Gastrocnemius medialis (tissue), 4 donors: ENCODE measurements at regions of chr13 and their contacts with region 1.

Region 1: GRCh38 chr13:41061075-41061913 is at the start of gene WBP4:
- DNase-seq: peak; percentile 91 to 93
- ATAC-seq: peak; percentile 74 to 76
- H3K4me3 ChIP-seq: peak within 1 kb of the TSS; percentile 71 to 90 (median 86)
- H3K27ac ChIP-seq: peak within 1 kb of the TSS; percentile 90 to 100 (median 98)
- H3K4me1 ChIP-seq: peaks cover 64 to 67% of the 10 kb centered on the region in 2 donors
- H3K27me3 ChIP-seq: no peaks in the 10 kb centered on the region
- CTCF ChIP-seq: peak in 2 of 5 experiments; percentile 3 to 24
- POLR2A ChIP-seq: peak; percentile 74 to 80
- total RNA-seq, gene WBP4: 20.2 to 31.3 (median 25.5) TPM

Region 2: DNA sequence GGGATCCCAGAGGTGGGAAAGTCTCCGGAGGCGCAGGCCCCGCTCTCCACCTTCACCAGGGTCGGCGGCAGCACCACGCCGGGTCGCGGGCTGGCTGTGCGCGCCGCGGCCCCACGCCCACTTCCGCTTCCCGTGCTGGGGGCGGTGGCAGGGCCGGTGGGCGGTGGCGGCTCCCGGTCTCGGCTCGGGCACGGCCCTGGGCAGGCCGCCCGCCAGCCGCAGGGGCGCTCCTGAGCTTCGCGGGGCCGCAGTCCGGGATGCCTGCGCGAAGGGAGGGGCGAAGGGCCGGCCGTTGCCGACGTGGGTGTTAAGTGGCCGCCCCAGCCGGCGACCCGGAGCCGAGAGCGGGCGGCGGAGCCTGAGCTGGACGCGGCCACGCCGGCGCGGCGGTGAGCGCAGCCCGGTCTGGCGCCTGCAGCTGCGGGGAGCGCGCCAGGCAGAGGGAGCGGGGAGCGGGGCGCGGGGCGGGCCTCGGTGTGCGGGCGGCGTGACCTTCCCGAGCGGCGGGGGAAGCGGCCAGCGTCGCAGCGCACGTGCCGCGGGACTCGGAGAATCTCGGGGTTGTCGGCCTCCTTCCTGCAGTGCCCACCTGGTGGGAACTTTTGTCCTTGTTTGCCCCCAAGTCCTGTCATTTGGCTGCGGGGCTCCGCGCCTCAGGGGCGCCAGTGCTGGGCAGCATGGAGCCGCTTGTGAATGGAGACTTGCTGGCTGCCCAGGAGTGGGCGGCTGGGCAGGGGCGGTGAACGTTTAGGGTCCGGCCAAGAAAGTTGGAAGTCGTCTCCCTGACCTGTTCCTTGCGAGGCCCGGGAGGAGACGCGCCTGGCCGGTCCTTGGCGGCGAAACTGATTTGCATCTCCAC is 271.8 kb before region 1 on chr13 and contains the start of gene SLC25A15:
- in situ Hi-C with region 1: loop called in 1 of 4 experiments (anchors 25 kb)
- intact Hi-C with region 1: no loop called
- DNase-seq: peak; percentile 25 to 67
- ATAC-seq: peak; percentile 84 to 85
- H3K4me3 ChIP-seq: peak within 1 kb of the TSS; percentile 55 to 99 (median 70)
- H3K27ac ChIP-seq: peak within 1 kb of the TSS; percentile 69 to 84 (median 78)
- H3K4me1 ChIP-seq: peaks cover 4 to 5% of the 10 kb centered on the region in 2 donors
- H3K27me3 ChIP-seq: no peaks in the 10 kb centered on the region
- CTCF ChIP-seq: peak in 3 of 5 experiments; percentile 23 to 38 (median 28)
- POLR2A ChIP-seq: peak in 1 of 2 donors; percentile 37
- total RNA-seq, gene SLC25A15: 4.3 to 19.3 (median 11.0) TPM

Region 3: DNA sequence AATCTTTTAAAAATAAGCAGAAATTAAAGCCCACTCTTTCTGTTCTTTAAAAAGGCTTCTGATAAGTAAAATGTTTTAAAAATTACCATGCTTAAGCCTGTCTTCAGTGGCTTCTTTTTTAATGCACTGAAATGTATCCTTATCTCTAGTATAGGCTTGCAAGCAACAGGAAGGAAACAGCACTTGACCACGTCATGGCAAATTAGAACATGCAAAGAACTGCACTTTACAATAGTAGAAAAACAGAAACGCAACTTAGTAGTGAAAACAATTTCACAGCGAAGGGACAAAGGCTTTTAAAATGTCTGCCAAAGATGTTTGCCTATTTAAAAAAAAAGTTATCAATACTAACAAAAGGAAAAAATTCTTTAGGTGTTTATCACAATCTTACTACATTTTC is 78.5 kb before region 1 on chr13:
- in situ Hi-C with region 1: loop called in 1 of 4 experiments (anchors 10 kb)
- intact Hi-C with region 1: loop called (anchors 1 kb)
- DNase-seq: peak in 1 of 2 donors; percentile 24
- ATAC-seq: peak; percentile 42 to 64
- H3K4me3 ChIP-seq: peak overlapping the region; percentile 21 to 44 (median 34)
- H3K27ac ChIP-seq: peak overlapping the region; percentile 70 to 79 (median 74)
- H3K4me1 ChIP-seq: peaks cover 59 to 71% of the 10 kb centered on the region in 2 donors
- H3K27me3 ChIP-seq: no peaks in the 10 kb centered on the region
- CTCF ChIP-seq: no peak
- POLR2A ChIP-seq: peak; percentile 41 to 83

Region 4: GRCh38 chr13:41179593-41180250 is 118.4 kb after region 1 on chr13:
- in situ Hi-C with region 1: no loop called
- intact Hi-C with region 1: no loop called
- DNase-seq: no peak
- ATAC-seq: no peak
- H3K4me3 ChIP-seq: no peak overlapping the region
- H3K27ac ChIP-seq: no peak overlapping the region
- H3K4me1 ChIP-seq: no peaks in the 10 kb centered on the region
- H3K27me3 ChIP-seq: no peaks in the 10 kb centered on the region
- CTCF ChIP-seq: no peak
- POLR2A ChIP-seq: no peak

Region 5: GRCh38 chr13:41193919-41194824 is 132.9 kb after region 1 on chr13 and contains the start of gene KBTBD7:
- in situ Hi-C with region 1: no loop called
- intact Hi-C with region 1: loop called (anchors 5 kb)
- DNase-seq: peak; percentile 90 to 93
- ATAC-seq: peak; percentile 96 to 97
- H3K4me3 ChIP-seq: peak within 1 kb of the TSS; percentile 82 to 90 (median 87)
- H3K27ac ChIP-seq: peak within 1 kb of the TSS; percentile 89 to 94 (median 92)
- H3K4me1 ChIP-seq: peaks cover 26 to 31% of the 10 kb centered on the region in 2 donors
- H3K27me3 ChIP-seq: no peaks in the 10 kb centered on the region
- CTCF ChIP-seq: peak in 1 of 5 experiments; percentile 29
- POLR2A ChIP-seq: peak; percentile 56 to 79
- total RNA-seq, gene KBTBD7: 2.3 to 5.6 (median 5.3) TPM

Region 6: DNA sequence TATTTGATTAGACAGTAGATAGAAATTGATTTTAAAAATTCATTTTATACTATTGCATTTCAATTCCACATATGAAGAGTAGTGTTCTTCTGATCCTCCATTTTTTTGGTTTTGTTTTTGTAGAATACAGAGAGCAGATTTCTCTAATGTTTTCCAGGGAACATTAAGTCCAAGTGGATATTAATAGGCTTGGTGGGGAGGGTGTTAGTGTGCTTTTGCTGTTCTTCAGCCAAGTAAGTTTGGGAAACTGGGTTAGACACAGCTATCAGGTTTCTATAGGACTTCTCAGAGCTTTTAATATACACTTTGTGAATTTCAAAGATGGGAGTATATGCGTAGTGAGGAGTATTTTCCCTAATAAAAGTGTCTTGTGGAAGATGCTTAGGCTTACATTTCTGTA is 271.5 kb after region 1 on chr13:
- in situ Hi-C with region 1: no loop called
- intact Hi-C with region 1: loop called (anchors 5 kb)
- DNase-seq: no peak
- ATAC-seq: peak; percentile 89 to 90
- H3K4me3 ChIP-seq: peak overlapping the region in 3 of 4 donors; percentile 0 to 23 (median 7)
- H3K27ac ChIP-seq: peak overlapping the region; percentile 74 to 84 (median 75)
- H3K4me1 ChIP-seq: peaks cover 56 to 65% of the 10 kb centered on the region in 2 donors
- H3K27me3 ChIP-seq: no peaks in the 10 kb centered on the region
- CTCF ChIP-seq: no peak
- POLR2A ChIP-seq: no peak